Activated CD4-positive, alpha-beta memory T cell treated with anti-CD3 and anti-CD28 coated beads, Interleukin-2, amount 10 ng/mL, durations not matched to agents 7 days and 5 days (primary cell): ENCODE measurements at regions of chr2 and their contacts with region 1.

Region 1: GRCh38 chr2:3558205-3559014 is at the start of gene RNASEH1:
- DNase-seq: peak; percentile 98
- H3K4me3 Mint-ChIP-seq: peak within 1 kb of the TSS; percentile 83
- H3K27ac Mint-ChIP-seq: peak within 1 kb of the TSS; percentile 87
- H3K4me1 Mint-ChIP-seq: peaks cover 45% of the 10 kb centered on the region
- H3K27me3 Mint-ChIP-seq: no peaks in the 10 kb centered on the region
- total RNA-seq, gene RNASEH1: 21.3 to 24.6 TPM

Region 2: GRCh38 chr2:3313781-3314375 is 244.5 kb before region 1 on chr2:
- CTCF ChIA-PET with region 1: no interaction called
- POLR2A ChIA-PET with region 1: no interaction called
- DNase-seq: no peak
- H3K4me3 Mint-ChIP-seq: no peak overlapping the region
- H3K27ac Mint-ChIP-seq: no peak overlapping the region
- H3K4me1 Mint-ChIP-seq: peaks cover 11% of the 10 kb centered on the region
- H3K27me3 Mint-ChIP-seq: no peaks in the 10 kb centered on the region

Region 3: GRCh38 chr2:3334392-3335345 is 223.7 kb before region 1 on chr2:
- CTCF ChIA-PET with region 1: no interaction called
- POLR2A ChIA-PET with region 1: no interaction called
- DNase-seq: no peak
- H3K4me3 Mint-ChIP-seq: no peak overlapping the region
- H3K27ac Mint-ChIP-seq: no peak overlapping the region
- H3K4me1 Mint-ChIP-seq: no peaks in the 10 kb centered on the region
- H3K27me3 Mint-ChIP-seq: no peaks in the 10 kb centered on the region

Region 4: GRCh38 chr2:3403587-3404334 is 154.6 kb before region 1 on chr2:
- CTCF ChIA-PET with region 1: no interaction called
- POLR2A ChIA-PET with region 1: no interaction called
- DNase-seq: no peak
- H3K4me3 Mint-ChIP-seq: no peak overlapping the region
- H3K27ac Mint-ChIP-seq: no peak overlapping the region
- H3K4me1 Mint-ChIP-seq: no peaks in the 10 kb centered on the region
- H3K27me3 Mint-ChIP-seq: no peaks in the 10 kb centered on the region

Region 5: DNA sequence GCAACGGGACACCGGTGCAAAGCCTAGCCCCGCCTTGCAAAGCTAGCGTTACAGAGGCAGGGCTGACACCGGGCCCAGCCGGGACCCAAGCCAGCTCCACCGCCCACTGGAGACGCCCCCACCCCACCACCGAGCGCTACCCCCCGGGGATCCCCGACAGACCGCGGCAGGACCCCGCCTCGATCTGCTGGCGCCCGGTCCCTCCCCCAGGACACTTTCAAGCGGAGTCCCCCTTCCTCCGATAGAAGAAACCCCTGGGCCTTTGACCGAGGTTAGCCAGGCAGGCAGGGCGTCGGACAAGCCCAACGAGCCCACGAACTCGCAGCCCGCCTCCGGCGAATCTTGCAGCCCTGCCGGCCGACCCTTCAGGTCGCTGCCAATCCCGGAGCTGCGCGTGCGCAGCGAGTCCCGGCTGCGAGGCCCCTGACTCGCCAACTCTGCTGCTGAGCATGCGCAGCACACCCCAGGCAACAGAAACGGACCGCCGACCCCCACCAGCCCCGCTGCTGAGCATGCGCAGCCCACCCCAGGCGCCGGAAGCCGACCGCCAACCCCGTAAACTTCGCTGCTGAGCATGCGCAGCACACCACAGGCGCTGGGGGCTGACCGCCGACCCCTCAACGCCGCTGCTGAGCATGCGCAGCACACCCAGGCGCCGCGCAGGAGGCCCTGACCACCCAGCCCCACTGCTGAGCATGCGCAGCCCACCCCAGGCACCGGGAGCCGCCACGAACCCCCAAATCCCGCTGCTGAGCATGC is 39.7 kb before region 1 on chr2:
- CTCF ChIA-PET with region 1: interaction called, 4 read pairs
- POLR2A ChIA-PET with region 1: interaction called, 63 read pairs
- DNase-seq: peak; percentile 98
- H3K4me3 Mint-ChIP-seq: peak overlapping the region; percentile 80
- H3K27ac Mint-ChIP-seq: peak overlapping the region; percentile 84
- H3K4me1 Mint-ChIP-seq: peaks cover 41% of the 10 kb centered on the region
- H3K27me3 Mint-ChIP-seq: no peaks in the 10 kb centered on the region

Region 6: DNA sequence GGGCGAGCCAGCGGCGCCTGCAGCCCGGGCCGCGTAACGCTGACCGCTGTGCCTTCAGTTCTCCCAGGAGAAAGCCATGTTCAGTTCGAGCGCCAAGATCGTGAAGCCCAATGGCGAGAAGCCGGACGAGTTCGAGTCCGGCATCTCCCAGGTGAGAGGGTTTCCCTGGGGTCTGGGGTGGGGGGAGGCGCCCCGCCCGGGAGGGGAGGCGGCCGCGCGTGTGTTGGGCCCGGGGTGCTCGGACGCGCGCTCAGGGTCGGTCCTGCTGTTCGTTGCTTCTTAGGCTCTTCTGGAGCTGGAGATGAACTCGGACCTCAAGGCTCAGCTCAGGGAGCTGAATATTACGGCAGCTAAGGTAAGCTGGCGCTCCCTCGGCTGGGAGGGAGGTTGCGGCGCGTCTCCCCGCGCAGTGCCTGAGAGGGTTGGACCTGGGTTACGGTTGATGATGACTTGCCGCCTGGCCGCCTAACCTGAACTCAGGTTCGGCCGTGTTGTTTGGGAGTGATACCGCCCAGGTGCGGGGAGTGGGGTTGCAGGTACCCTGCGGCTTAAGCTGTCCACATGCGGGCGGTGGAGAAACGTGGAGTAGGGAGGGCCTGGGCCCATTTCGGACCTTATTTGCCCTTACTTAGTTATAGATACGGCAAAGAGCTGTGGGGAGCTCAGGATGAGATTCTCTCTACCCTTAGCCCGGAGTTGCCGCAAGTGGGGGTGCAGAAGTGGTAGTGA is 17.3 kb after region 1 on chr2:
- CTCF ChIA-PET with region 1: interaction called, 8 read pairs
- POLR2A ChIA-PET with region 1: interaction called, 61 read pairs
- DNase-seq: peak; percentile 36
- H3K4me3 Mint-ChIP-seq: peak overlapping the region; percentile 92
- H3K27ac Mint-ChIP-seq: peak overlapping the region; percentile 83
- H3K4me1 Mint-ChIP-seq: peaks cover 55% of the 10 kb centered on the region
- H3K27me3 Mint-ChIP-seq: no peaks in the 10 kb centered on the region

Region 7: DNA sequence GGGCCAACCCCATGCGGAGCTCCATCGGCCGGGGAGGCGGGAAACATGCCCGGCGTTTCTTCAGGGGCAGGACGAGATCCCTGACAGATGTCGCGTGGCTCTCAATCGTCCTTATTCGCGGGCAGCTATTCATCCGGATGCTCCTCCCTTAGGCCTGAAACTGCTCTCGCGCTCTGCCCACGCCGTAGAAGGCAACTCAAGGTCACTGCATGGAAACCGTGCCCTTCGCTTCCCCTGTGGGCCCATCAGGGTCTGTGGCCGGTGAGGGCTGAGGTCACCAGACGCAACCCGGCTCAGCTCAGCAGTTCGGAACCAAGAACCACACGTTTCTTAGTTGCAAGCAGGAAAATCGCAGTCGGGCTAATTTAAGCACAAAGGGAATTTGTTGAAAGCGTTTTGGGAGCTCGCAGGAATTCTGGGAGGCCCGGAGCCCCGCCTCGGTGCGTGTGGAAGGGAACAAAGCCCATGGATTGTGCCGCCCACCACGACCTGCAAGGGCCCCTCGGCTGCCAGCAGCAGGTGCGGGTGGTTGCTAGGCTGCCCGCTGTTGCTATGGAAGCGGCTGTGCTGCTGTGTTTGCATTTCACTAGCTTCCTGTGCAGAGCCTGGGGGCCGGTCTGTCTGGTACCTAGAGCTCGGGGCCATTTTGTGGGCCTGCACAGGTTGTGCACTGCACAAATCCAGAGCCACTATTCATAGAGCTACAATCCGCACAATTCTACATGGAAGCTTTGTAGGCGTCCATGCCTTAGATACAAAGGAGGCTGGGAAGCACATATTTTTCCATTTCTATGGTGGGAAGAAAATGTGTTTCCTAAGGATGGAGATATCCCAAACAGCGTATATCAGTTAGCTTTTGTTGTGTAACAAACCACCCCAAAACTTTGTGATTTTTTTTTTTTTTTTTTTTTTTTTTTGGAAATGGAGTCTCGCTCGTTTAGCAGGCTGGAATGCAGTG is 93.6 kb after region 1 on chr2:
- CTCF ChIA-PET with region 1: interaction called, 3 read pairs
- POLR2A ChIA-PET with region 1: interaction called, 19 read pairs
- DNase-seq: peak; percentile 78
- H3K4me3 Mint-ChIP-seq: peak overlapping the region; percentile 74
- H3K27ac Mint-ChIP-seq: peak overlapping the region; percentile 72
- H3K4me1 Mint-ChIP-seq: peaks cover 15% of the 10 kb centered on the region
- H3K27me3 Mint-ChIP-seq: no peaks in the 10 kb centered on the region